ENCODE measurements at regions of chr9 and their contacts with region 1.

Region 1: DNA sequence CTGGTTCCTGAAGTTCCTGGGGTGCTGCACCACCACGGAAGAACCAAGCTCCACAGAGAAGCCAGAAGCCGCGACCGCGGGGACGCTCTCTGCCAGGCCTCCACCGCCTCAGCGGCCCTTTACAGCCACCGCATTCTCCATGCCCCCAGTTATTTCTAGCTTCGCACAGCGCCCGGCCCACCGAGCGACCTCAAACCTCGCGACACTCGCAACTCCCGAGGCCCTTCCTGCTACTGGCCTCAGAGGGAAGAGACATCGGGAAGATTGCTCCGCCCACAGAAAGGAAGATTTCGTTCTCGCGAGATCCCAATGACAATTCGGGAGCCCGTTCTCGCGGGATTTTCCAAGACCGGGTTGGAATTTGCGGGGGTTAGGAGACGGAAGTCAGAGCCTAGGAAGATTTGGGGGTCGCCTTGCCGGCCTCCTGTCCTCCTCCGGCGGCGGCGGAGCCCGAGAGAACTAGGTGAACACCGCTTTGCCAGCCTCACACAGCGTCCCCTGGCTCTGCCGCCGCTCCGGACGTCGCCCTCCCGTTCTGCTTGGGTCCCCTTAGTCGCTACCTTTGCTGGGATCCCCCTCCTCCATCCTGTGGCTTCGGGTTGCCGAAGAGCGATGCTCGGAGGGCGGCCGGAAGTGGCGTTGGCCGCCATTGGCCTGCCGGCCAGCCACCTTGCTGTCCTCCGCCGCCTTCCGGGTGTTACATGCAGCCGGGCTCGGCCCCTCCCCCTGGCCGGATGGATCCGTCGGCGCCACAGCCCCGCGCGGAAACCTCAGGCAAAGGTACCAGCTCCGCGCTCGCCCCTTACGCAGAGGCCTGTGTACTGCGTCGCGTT is at the start of gene ERCC6L2:
- DNase-seq: peak; percentile 94
- ATAC-seq: peak; percentile 87
- H3K4me3 Mint-ChIP-seq: no peak within 1 kb of the TSS
- H3K27ac Mint-ChIP-seq: no peak within 1 kb of the TSS
- H3K4me1 Mint-ChIP-seq: peaks cover 27% of the 10 kb centered on the region
- H3K27me3 Mint-ChIP-seq: no peaks in the 10 kb centered on the region
- total RNA-seq, gene ERCC6L2: 42.3 to 42.5 TPM

Region 2: DNA sequence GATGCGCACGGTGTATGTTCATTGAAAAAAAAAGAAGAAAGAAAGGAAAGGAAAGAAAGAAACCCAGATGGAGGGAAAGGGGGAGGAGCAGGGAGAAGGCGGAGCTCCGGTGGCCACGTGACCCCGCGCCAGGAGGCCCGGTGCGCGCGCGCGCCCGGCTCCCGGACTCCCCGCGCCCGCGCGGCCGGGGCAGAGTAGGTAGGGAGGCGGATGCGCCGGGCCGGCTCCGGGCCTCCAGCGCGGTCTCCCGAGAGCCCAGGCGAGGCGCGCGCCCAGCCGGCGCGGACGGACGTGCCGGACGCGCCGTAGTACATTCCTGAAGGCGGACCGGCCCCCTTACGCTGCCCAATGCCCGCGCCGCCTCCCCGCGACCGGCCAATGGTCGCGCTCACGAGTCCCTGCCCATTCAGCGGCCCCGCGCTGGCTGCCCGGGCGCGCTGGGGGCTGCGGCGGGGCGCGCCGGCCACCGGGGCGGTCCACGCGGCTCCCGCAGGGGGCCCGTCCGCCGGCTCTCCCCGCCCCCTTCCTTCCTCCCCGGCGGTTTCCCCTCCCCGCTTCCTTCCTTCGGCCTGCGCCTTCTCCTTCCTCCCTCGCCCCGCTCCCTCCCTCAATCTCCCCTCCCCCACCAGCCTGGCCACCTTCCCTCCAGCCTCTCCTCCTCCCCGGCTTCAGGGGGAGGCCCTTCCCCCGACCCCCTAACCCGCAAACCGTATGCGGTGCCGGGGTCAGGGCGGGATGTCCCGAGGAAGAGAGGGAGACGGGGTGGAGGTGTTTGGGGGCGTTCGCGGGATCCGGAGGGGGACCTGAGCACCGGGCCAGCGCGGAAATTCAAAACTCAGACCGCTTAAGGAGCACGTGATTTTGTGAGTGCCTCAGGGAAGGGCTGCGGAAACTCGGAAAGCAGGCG is 364.6 kb before region 1 on chr9:
- POLR2A ChIA-PET with region 1: interaction called, 12 read pairs
- DNase-seq: peak; percentile 88
- ATAC-seq: peak; percentile 66
- H3K4me3 Mint-ChIP-seq: peak overlapping the region; percentile 91
- H3K27ac Mint-ChIP-seq: peak overlapping the region; percentile 84
- H3K4me1 Mint-ChIP-seq: peaks cover 31% of the 10 kb centered on the region
- H3K27me3 Mint-ChIP-seq: peaks cover 51% of the 10 kb centered on the region

Region 3: DNA sequence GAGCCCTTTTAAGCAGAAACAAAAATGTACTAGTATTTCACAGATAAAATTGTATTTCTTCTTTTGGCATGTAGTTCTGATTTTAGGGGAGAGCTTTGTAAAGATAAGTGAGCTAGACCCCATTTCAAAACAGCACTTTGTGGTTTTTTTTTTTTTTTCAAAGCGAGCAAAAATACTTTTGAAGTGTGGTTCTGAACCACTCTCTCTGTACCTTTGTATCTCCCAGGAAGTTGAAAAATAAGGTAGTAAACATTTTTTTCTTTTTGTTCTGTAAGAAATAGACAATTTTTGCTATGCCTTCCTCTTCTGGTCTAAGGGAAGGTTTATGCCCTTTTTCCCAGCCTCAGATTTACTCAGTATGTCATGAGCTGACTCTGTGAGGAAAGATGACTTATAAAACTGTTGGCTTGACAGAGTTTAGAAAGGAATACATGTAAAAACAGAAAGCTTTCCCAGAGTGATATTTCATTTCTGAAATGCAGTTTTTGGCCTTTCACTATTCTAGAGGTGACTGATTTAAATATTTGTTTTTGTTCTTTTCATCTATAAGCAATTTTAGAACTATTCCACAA is 12.5 kb after region 1 on chr9:
- POLR2A ChIA-PET with region 1: interaction called, 18 read pairs
- DNase-seq: no peak
- ATAC-seq: peak; percentile 61
- H3K4me3 Mint-ChIP-seq: peak overlapping the region; percentile 72
- H3K27ac Mint-ChIP-seq: peak overlapping the region; percentile 87
- H3K4me1 Mint-ChIP-seq: peaks cover 50% of the 10 kb centered on the region
- H3K27me3 Mint-ChIP-seq: no peaks in the 10 kb centered on the region

Region 4: DNA sequence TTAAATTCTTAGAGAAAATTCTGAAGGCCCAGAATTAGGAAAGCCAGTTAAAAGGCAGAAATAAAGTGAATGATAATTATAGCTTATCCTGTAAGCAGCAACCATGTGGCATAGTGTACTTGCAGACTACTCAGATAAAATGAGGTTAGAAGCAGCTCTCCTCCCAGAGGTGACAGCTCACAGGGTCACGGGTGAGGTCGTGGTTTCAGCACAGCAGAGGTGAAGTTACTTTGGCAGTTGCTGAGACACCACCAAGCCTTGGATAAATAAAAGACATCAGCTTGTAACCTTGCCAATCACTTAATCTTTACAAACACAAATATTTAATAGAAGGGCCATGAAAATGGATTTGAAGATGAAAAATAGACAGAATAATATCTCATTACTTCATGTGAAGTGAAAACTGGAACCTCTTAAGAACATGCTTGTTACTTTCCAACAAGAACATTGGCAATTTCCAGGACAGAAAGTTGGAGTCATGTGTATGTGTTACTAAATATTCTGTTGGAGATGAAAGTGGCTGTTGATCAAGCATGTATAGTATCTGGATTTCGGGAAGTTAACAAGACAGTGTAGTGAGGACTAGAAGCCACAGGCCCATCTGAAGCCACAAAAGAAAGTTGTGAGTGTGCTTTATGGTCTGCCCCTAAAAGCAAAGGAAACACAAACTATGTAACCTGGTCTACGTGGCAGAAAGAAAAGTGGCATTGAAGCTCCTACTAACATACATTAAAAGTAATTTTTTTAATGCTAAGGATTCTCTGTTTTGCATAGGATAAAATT is 134.4 kb after region 1 on chr9:
- POLR2A ChIA-PET with region 1: interaction called, 30 read pairs
- DNase-seq: peak; percentile 63
- ATAC-seq: peak; percentile 79
- H3K4me3 Mint-ChIP-seq: peak overlapping the region; percentile 64
- H3K27ac Mint-ChIP-seq: peak overlapping the region; percentile 92
- H3K4me1 Mint-ChIP-seq: peaks cover 45% of the 10 kb centered on the region
- H3K27me3 Mint-ChIP-seq: no peaks in the 10 kb centered on the region

Region 5: DNA sequence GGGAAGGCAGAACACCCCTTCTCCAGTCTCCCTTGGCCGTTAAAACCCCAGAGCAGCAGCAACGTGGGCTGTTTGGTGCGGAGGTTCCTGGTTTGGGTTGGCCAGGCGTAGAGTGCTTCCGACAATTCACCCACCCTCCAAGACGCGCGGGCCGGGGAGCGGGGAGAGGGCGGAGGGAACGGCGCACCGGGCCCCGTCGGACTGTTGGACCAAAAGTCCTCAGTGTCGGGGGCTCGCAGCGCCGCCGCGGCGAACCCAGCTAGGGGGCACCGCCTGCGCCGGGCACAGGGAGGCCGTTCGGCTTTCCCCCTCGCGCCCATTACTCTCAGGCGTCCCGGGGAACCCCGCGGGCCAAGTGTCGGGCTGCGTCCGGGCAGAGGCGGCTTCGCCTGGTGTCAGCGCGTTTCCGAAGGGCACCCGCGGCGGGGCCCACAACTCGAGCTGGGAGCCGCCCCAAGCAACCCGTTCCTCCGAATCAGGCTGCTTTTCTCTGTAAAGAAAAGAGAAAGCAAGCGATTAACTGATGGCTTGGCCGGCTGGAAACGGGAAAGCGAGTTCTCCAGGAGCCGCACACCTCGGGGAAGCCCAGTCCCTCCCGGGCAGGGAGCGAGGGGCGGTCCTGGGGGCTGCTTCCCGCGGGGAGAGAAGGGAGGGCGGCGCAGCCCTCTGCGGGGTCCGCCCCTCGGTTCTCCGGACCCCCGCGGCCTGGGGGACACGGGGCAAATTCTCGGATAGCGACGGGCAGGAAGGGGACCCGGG is 145.4 kb after region 1 on chr9:
- POLR2A ChIA-PET with region 1: interaction called, 30 read pairs
- DNase-seq: peak; percentile 76
- ATAC-seq: peak; percentile 42
- H3K4me3 Mint-ChIP-seq: peak overlapping the region; percentile 90
- H3K27ac Mint-ChIP-seq: peak overlapping the region; percentile 94
- H3K4me1 Mint-ChIP-seq: peaks cover 59% of the 10 kb centered on the region
- H3K27me3 Mint-ChIP-seq: peaks cover 9% of the 10 kb centered on the region